CD4-positive, alpha-beta T cell (primary cell): ENCODE measurements at regions of chr11 and their contacts with region 1.

Region 1: DNA sequence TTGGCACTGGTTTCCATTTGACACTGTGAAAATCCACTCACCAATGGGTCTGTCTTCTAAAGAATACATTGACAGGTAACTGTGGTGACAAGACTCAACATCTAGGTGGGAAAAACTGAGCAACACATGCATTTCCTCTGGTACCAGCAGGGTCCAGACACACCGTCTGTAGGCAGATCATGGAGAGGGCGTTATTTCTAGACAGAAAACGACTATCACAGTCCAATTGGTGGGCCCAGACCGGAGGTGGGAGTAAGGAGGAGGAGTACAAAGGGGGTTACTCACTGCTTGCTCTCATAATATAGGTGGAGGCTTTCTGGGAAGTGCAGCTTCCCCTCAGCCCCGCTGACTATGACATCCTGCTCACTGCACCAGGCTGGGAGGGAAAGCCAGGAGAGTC is 9.9 kb downstream of the OVCH2 start:
- DNase-seq: no peak
- ATAC-seq: no peak
- H3K4me3 ChIP-seq: no peak overlapping the region
- H3K4me3 Mint-ChIP-seq: no peak overlapping the region
- H3K27ac ChIP-seq: no peak overlapping the region
- H3K27ac Mint-ChIP-seq: no peak overlapping the region
- H3K4me1 ChIP-seq: no peaks in the 10 kb centered on the region
- H3K4me1 Mint-ChIP-seq: no peaks in the 10 kb centered on the region
- H3K27me3 ChIP-seq: peaks cover 14 to 31% of the 10 kb centered on the region in 2 experiments
- H3K27me3 Mint-ChIP-seq: peaks cover 44% of the 10 kb centered on the region
- CTCF ChIP-seq: no peak

Region 2: GRCh38 chr11:6812390-6813005 is 883.9 kb before region 1 on chr11:
- CTCF ChIA-PET with region 1: no interaction called
- POLR2A ChIA-PET with region 1: no interaction called
- intact Hi-C with region 1: loop called (anchors 2 to 5 kb)
- DNase-seq: peak in 9 of 14 experiments; percentile 1 to 68 (median 18)
- ATAC-seq: peak; percentile 88
- H3K4me3 ChIP-seq: no peak overlapping the region
- H3K4me3 Mint-ChIP-seq: no peak overlapping the region
- H3K27ac ChIP-seq: no peak overlapping the region
- H3K27ac Mint-ChIP-seq: no peak overlapping the region
- H3K4me1 ChIP-seq: peaks cover 4% of the 10 kb centered on the region
- H3K4me1 Mint-ChIP-seq: no peaks in the 10 kb centered on the region
- H3K27me3 ChIP-seq: no peaks in the 10 kb centered on the region
- H3K27me3 Mint-ChIP-seq: peaks cover 49% of the 10 kb centered on the region
- CTCF ChIP-seq: peak; percentile 91

Region 3: DNA sequence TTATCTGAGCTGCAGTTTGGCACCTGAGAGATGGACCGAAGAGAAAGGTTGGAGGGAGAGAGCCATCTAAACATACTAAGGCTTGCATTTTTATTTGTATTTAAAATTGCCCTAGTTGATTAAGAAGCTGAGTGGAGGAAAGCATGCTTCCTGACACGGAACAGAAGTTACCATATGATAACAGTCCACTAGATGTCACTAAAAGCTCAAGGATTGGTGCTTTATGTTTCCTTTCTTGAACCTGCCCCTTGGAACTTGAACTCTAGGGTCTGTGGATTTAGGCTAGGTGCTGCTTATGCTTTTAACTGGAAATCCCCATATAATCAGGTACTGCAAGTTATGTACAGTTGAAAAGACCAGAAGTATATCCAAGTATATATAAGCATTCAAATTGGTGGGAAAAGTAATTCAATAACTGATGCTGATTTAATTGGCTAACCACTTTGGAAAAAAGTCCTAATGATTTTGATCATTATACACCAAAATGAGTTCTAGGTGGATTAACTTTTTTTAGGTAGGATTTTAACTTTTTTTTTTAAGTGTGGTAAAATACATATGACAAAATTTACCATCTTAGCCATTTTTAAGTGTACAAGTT is 598.1 kb before region 1 on chr11:
- CTCF ChIA-PET with region 1: interaction called, 7 read pairs
- POLR2A ChIA-PET with region 1: no interaction called
- intact Hi-C with region 1: loop called (anchors 1 kb)
- DNase-seq: peak in 3 of 14 experiments; percentile 47 to 73 (median 64)
- ATAC-seq: peak; percentile 54
- H3K4me3 ChIP-seq: no peak overlapping the region
- H3K4me3 Mint-ChIP-seq: no peak overlapping the region
- H3K27ac ChIP-seq: no peak overlapping the region
- H3K27ac Mint-ChIP-seq: no peak overlapping the region
- H3K4me1 ChIP-seq: no peaks in the 10 kb centered on the region
- H3K4me1 Mint-ChIP-seq: no peaks in the 10 kb centered on the region
- H3K27me3 ChIP-seq: peaks cover 0 to 30% of the 10 kb centered on the region in 2 experiments
- H3K27me3 Mint-ChIP-seq: peaks cover 31% of the 10 kb centered on the region
- CTCF ChIP-seq: peak; percentile 72

Region 4: GRCh38 chr11:7495882-7496551 is 200.4 kb before region 1 on chr11:
- CTCF ChIA-PET with region 1: no interaction called
- POLR2A ChIA-PET with region 1: no interaction called
- intact Hi-C with region 1: no loop called
- DNase-seq: peak in 2 of 14 experiments; percentile 40 to 50
- ATAC-seq: no peak
- H3K4me3 ChIP-seq: no peak overlapping the region
- H3K4me3 Mint-ChIP-seq: no peak overlapping the region
- H3K27ac ChIP-seq: no peak overlapping the region
- H3K27ac Mint-ChIP-seq: no peak overlapping the region
- H3K4me1 ChIP-seq: no peaks in the 10 kb centered on the region
- H3K4me1 Mint-ChIP-seq: no peaks in the 10 kb centered on the region
- H3K27me3 ChIP-seq: no peaks in the 10 kb centered on the region
- H3K27me3 Mint-ChIP-seq: no peaks in the 10 kb centered on the region
- CTCF ChIP-seq: no peak